Mucosa of descending colon (tissue), 3 donors: ENCODE measurements at regions of chr17 and their contacts with region 1.

Region 1: GRCh38 chr17:81101614-81102306 is 63.5 kb upstream of the PVALEF start:
- DNase-seq: peak; percentile 86 to 92 (median 86)
- ATAC-seq: peak; percentile 97
- H3K4me3 ChIP-seq: no peak overlapping the region
- H3K4me1 ChIP-seq: peaks cover 10% of the 10 kb centered on the region
- CTCF ChIP-seq: peak; percentile 100

Region 2: GRCh38 chr17:80991645-80992076 is 110.1 kb before region 1 on chr17 and contains the start of gene CHMP6:
- intact Hi-C with region 1: loop called in 1 of 2 experiments (anchors 5 kb)
- DNase-seq: peak; percentile 76 to 86 (median 85)
- ATAC-seq: peak; percentile 85
- H3K4me3 ChIP-seq: peak within 1 kb of the TSS; percentile 95
- H3K4me1 ChIP-seq: peaks cover 22% of the 10 kb centered on the region
- CTCF ChIP-seq: peak; percentile 13
- total RNA-seq, gene CHMP6: 35.1 to 43.9 (median 35.4) TPM

Region 3: GRCh38 chr17:81027591-81028505 is 73.9 kb before region 1 on chr17:
- intact Hi-C with region 1: loop called in 1 of 2 experiments (anchors 5 kb)
- DNase-seq: peak in 2 of 3 donors; percentile 32 to 40
- ATAC-seq: no peak
- H3K4me3 ChIP-seq: no peak overlapping the region
- H3K4me1 ChIP-seq: peaks cover 7% of the 10 kb centered on the region
- CTCF ChIP-seq: no peak

Region 4: GRCh38 chr17:81576621-81577277 is 475.0 kb after region 1 on chr17:
- intact Hi-C with region 1: no loop called
- DNase-seq: no peak
- ATAC-seq: peak; percentile 20
- H3K4me3 ChIP-seq: no peak overlapping the region
- H3K4me1 ChIP-seq: no peaks in the 10 kb centered on the region
- CTCF ChIP-seq: no peak